PC-9 (cell line): ENCODE measurements at regions of chr2 and their contacts with region 1.

Region 1: GRCh38 chr2:26475037-26475436 is 2.9 kb downstream of the OTOF start:
- DNase-seq: no peak
- H3K4me3 ChIP-seq: no peak overlapping the region
- H3K27ac ChIP-seq: no peak overlapping the region
- H3K4me1 ChIP-seq: no peaks in the 10 kb centered on the region
- H3K27me3 ChIP-seq: no peaks in the 10 kb centered on the region
- CTCF ChIP-seq: no peak

Region 2: DNA sequence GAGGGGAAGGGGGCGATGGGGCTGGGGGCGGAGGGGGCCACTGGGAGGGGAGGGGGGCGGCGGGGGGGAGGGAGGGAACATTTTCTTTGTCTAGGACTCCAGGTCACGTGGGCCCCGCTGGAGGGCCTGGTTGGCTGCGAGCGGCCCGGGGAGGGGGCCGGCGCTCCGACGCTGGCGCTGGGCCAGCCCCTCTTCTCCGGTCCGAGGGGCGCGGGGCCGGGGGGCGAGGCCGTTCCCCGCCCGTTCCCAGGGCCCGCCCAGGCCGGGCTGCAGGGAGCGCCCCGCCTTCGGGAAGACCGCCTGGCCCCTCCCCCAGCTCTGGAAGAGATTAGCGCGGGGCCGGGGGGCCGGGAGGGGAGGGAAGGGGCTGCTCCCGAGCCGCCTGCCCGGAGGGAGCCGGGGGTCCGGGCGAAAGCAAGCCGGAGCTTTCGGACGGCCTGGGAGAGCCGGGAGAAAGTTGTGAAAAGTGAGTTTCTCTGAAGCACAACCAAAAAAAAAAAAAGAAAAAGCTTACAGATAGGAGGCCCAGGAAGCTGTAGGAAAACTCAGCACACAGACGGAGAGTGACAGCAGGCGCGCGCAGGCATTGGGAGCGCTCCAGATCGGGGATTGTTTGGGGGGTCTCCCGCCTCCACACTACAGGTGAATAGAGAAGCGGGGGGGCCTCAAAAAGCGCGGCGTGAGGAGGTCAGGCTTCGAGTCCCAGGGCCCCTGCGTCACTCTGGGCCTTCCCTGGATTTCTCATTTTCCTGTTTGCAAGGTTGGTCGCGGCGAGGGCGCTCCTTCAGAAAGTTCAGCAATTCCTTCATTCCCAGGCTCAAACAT is 1222.5 kb before region 1 on chr2:
- CTCF ChIA-PET with region 1: no interaction called
- POLR2A ChIA-PET with region 1: interaction called, 13 read pairs
- intact Hi-C with region 1: no loop called
- DNase-seq: peak in 1 of 2 experiments; percentile 72
- H3K4me3 ChIP-seq: peak overlapping the region; percentile 97
- H3K27ac ChIP-seq: 0 out of 2 replicates have a peak overlapping the region, but pooled peaks have one; percentile 23
- H3K4me1 ChIP-seq: 0 out of 2 replicates have a peak, but pooled peaks cover 9% of the 10 kb centered on the region
- H3K27me3 ChIP-seq: no peaks in the 10 kb centered on the region
- CTCF ChIP-seq: no peak

Region 3: DNA sequence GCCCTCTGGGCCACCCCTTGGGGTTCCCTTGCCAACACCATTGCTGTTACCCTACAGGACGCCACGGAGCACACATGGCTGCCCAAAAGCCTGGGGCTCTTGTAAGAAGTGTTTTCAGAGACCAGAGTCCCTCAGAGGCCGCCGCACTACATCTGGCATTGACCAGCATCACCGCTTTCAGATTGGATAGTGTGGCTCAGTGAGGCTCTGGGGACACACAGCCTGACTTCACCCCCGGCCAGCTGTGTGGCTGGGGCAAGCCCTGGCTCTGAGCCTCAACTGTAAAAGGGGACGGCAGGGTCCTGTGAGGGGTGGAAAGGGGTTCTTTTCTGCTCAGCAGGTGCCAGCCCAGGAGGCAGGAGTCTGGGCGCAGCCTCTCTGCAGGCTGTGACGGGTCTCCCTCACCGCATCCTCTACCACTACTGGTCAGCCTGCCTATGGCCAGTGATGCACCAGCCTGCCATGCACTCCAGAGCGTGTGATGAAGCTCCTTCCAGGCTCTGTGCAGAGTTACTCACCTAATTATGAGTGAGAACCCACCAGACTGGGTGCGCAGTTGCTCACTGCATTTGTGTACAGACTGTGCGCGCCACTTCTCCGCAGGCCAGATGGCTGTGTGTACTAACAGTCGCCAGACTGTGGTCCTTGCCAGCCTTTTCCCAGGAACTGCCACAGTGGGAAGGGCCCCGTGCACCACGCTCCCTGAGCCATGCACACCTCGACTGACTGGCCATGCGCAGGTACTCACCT is 13.6 kb after region 1 on chr2:
- CTCF ChIA-PET with region 1: no interaction called
- POLR2A ChIA-PET with region 1: no interaction called
- intact Hi-C with region 1: no loop called
- DNase-seq: no peak
- H3K4me3 ChIP-seq: no peak overlapping the region
- H3K27ac ChIP-seq: no peak overlapping the region
- H3K4me1 ChIP-seq: no peaks in the 10 kb centered on the region
- H3K27me3 ChIP-seq: peaks cover 30% of the 10 kb centered on the region; the same call in 1 of the 2 replicates
- CTCF ChIP-seq: no peak